ENCODE measurements at regions of chr16 and their contacts with region 1.

Region 1: DNA sequence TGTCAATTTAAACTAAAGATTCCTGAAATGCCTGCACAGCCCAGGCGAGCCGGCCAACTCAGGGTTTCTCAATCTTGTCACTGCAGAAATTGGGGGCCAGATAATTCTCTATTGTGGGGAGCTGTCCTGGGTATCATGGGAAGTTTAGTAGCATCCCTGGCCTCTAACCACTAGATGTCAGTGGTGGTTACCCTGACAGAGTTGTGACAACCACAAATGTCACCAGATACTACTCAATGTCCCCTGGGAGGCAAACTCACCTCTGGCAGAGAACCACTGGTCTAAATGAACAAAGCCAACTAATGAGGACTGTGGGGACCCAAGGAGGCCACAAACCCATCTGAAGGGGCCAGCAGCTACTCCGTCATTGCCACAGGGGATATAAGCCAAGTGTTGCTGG is 90.9 kb downstream of the MYH11 start:
- DNase-seq: peak; percentile 45 to 53
- H3K4me3 ChIP-seq: no peak overlapping the region
- H3K27ac ChIP-seq: no peak overlapping the region
- H3K4me1 ChIP-seq: no peaks in the 10 kb centered on the region
- H3K27me3 ChIP-seq: peaks cover 14% of the 10 kb centered on the region
- CTCF ChIP-seq: peak; percentile 73

Region 2: DNA sequence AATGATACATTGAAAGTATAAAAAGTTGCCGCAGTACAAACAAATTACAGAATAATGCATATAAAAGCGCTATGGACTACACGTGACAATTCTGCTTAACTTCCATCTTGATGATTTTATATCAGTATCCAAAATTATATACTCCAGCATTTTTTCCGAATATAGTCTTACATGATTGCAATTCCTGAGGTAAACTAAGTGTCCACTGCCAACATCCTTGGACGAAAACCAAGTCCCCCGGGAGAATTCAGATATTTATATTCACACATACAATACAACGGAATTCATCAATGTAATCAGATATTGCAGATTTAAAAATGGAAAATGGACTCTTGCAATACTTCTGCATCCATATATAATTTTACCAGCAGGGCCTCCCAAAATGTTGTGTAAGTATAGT is 99.9 kb after region 1 on chr16:
- CTCF ChIA-PET with region 1: no interaction called
- POLR2A ChIA-PET with region 1: no interaction called
- intact Hi-C with region 1: no loop called
- DNase-seq: no peak
- H3K4me3 ChIP-seq: no peak overlapping the region
- H3K27ac ChIP-seq: no peak overlapping the region
- H3K4me1 ChIP-seq: no peaks in the 10 kb centered on the region
- H3K27me3 ChIP-seq: no peaks in the 10 kb centered on the region
- CTCF ChIP-seq: no peak

Region 3: GRCh38 chr16:16127469-16128116 is 361.7 kb after region 1 on chr16:
- CTCF ChIA-PET with region 1: no interaction called
- POLR2A ChIA-PET with region 1: no interaction called
- intact Hi-C with region 1: loop called (anchors 1 kb)
- DNase-seq: peak; percentile 69 to 79
- H3K4me3 ChIP-seq: no peak overlapping the region
- H3K27ac ChIP-seq: no peak overlapping the region
- H3K4me1 ChIP-seq: no peaks in the 10 kb centered on the region
- H3K27me3 ChIP-seq: no peaks in the 10 kb centered on the region
- CTCF ChIP-seq: peak; percentile 93

Region 4: DNA sequence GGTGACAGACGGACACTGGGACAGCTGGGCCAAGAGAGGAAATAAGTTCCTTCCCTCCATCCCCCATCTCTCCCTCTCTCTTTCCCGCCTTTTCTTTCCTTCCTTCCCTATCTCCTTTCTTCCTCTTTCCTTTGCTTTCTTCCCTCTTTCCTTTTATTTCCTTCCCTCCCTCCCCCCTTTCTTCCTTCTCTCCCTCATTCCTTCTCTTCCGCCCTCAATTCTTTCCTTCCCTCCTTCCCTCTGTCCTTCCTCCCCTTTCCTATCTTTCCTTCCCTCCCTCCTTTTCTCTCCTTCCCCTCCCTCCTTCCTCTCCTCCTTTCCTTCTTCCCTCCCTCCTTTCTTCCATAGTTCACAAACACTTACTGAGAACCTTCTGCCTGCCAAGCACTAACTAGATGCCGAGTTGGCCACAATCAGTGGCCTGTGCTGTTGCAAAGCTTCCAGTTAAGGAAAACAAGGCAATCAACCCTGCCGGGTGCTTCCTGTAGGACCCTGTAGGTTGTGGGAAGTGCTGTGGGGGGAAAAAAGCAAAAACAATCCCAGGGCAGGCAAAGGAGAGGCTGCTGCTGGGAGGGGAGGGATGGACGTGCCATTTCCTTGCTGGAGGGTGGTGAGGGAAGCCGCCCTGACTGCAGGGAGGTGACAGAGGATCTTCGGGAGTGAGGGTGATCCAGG is 425.8 kb after region 1 on chr16:
- CTCF ChIA-PET with region 1: no interaction called
- POLR2A ChIA-PET with region 1: no interaction called
- intact Hi-C with region 1: loop called (anchors 1 kb)
- DNase-seq: no peak
- H3K4me3 ChIP-seq: no peak overlapping the region
- H3K27ac ChIP-seq: no peak overlapping the region
- H3K4me1 ChIP-seq: no peaks in the 10 kb centered on the region
- H3K27me3 ChIP-seq: no peaks in the 10 kb centered on the region; the same call in 1 of the 2 replicates
- CTCF ChIP-seq: no peak